ENCODE measurements at regions of chr13 and their contacts with region 1.

Region 1: GRCh38 chr13:35630551-35631275 is 154.2 kb upstream of the MAB21L1 start:
- DNase-seq: peak; percentile 16
- H3K4me3 ChIP-seq: no peak overlapping the region
- H3K27ac ChIP-seq: no peak overlapping the region
- H3K4me1 ChIP-seq: no peaks in the 10 kb centered on the region
- H3K27me3 ChIP-seq: no peaks in the 10 kb centered on the region
- CTCF ChIP-seq: peak in 3 of 4 experiments; percentile 37 to 73 (median 47)
- POLR2A ChIP-seq: no peak

Region 2: GRCh38 chr13:35720690-35721554 is 90.2 kb after region 1 on chr13:
- intact Hi-C with region 1: loop called (anchors 5 kb)
- DNase-seq: peak; percentile 19
- H3K4me3 ChIP-seq: no peak overlapping the region
- H3K27ac ChIP-seq: no peak overlapping the region
- H3K4me1 ChIP-seq: no peaks in the 10 kb centered on the region
- H3K27me3 ChIP-seq: no peaks in the 10 kb centered on the region
- CTCF ChIP-seq: peak; percentile 71 to 87 (median 82)
- POLR2A ChIP-seq: no peak

Region 3: DNA sequence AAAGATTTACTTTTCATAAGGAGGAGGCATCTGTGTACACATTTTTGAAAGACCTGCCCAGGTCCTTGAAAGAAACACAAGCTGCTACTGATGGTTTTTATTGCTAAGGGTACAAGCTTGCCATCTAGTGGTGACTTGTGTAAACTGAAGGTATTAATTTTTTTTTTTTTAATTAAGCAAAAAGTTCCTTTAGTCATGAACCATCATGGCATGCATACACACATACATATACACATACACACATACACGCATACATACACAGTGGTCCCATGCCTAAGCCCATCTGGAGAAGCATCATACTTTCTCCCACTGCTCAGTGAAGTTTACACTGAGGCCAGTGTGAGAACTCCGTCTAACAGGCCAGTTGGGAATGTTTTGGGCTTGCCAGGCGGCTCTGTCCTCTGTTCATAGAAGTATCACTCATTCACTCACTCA is 187.9 kb after region 1 on chr13:
- intact Hi-C with region 1: loop called (anchors 10 kb)
- DNase-seq: no peak
- H3K4me3 ChIP-seq: no peak overlapping the region
- H3K27ac ChIP-seq: no peak overlapping the region
- H3K4me1 ChIP-seq: no peaks in the 10 kb centered on the region
- H3K27me3 ChIP-seq: no peaks in the 10 kb centered on the region
- CTCF ChIP-seq: peak; percentile 54 to 78 (median 67)
- POLR2A ChIP-seq: no peak

Measured in prostate gland (tissue), 2 donors.